CD4-positive, alpha-beta T cell (primary cell): ENCODE measurements at regions of chr7 and their contacts with region 1.

Region 1: GRCh38 chr7:142811154-142811737 is 40.5 kb downstream of the PRSS2 start:
- DNase-seq: peak in 4 of 14 experiments; percentile 59 to 87 (median 86)
- ATAC-seq: no peak
- H3K4me3 ChIP-seq: no peak overlapping the region
- H3K4me3 Mint-ChIP-seq: peak overlapping the region; percentile 62
- H3K27ac ChIP-seq: peak overlapping the region; percentile 95 to 99
- H3K27ac Mint-ChIP-seq: peak overlapping the region; percentile 98
- H3K4me1 ChIP-seq: peaks cover 77% of the 10 kb centered on the region
- H3K4me1 Mint-ChIP-seq: peaks cover 99% of the 10 kb centered on the region
- H3K27me3 ChIP-seq: no peaks in the 10 kb centered on the region
- H3K27me3 Mint-ChIP-seq: no peaks in the 10 kb centered on the region
- CTCF ChIP-seq: peak; percentile 78

Region 2: GRCh38 chr7:142248166-142249160 is 562.8 kb before region 1 on chr7:
- CTCF ChIA-PET with region 1: no interaction called
- POLR2A ChIA-PET with region 1: no interaction called
- intact Hi-C with region 1: no loop called
- DNase-seq: no peak
- ATAC-seq: no peak
- H3K4me3 ChIP-seq: no peak overlapping the region
- H3K4me3 Mint-ChIP-seq: no peak overlapping the region
- H3K27ac ChIP-seq: no peak overlapping the region
- H3K27ac Mint-ChIP-seq: no peak overlapping the region
- H3K4me1 ChIP-seq: no peaks in the 10 kb centered on the region
- H3K4me1 Mint-ChIP-seq: no peaks in the 10 kb centered on the region
- H3K27me3 ChIP-seq: peaks cover 0 to 2% of the 10 kb centered on the region in 2 experiments
- H3K27me3 Mint-ChIP-seq: no peaks in the 10 kb centered on the region
- CTCF ChIP-seq: no peak

Region 3: DNA sequence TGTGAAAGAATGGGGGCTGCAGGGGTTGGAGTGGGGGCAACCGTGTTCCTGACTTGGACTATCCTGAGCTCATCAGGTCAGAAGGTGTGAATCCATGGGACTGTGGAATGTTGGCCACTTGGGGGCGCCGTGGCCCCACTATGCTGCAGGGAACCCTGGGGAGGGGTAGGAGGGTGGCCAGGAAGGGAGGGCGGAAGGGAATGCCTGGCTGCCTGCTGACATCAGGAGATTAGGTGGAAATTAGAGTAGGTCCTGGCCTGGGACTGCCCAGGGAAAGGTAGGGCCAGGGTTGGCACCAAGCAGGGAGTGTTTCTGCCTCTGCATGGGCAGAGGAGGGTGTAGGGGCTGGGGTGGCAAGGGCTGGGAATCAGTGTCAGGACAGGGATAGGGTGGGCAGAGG is 487.5 kb before region 1 on chr7:
- CTCF ChIA-PET with region 1: interaction called, 14 read pairs
- POLR2A ChIA-PET with region 1: interaction called, 74 read pairs
- intact Hi-C with region 1: loop called (anchors 1 to 5 kb)
- DNase-seq: peak in 8 of 14 experiments; percentile 34 to 72 (median 54)
- ATAC-seq: peak; percentile 38
- H3K4me3 ChIP-seq: no peak overlapping the region
- H3K4me3 Mint-ChIP-seq: no peak overlapping the region
- H3K27ac ChIP-seq: peak overlapping the region in 1 of 2 donors; percentile 17
- H3K27ac Mint-ChIP-seq: peak overlapping the region; percentile 83
- H3K4me1 ChIP-seq: peaks cover 24% of the 10 kb centered on the region
- H3K4me1 Mint-ChIP-seq: peaks cover 38% of the 10 kb centered on the region
- H3K27me3 ChIP-seq: no peaks in the 10 kb centered on the region
- H3K27me3 Mint-ChIP-seq: peaks cover 16% of the 10 kb centered on the region
- CTCF ChIP-seq: peak; percentile 45

Region 4: DNA sequence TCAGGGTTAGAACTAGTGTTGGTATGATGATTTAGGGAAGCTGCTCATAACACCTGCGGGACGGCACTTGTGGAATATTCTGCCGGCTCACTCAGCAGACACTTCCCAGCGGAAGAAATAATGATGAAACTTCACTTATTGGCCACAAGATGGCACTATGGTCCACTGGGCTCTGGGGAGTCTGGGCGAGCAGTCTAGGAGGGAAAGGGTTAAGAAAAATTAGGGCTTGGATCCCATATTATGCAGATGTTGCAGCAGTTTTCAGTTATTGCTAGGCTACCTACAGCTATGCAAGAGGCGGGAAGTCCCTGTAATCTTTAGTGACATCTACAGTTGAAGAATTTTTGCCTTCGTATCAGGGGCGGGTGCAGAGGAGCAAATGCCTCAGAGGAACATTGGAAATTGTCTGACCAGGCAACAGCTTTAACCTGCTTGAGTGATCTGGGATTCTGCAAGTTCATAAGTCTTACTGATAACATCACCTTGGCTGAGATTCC is 314.7 kb before region 1 on chr7:
- CTCF ChIA-PET with region 1: no interaction called
- POLR2A ChIA-PET with region 1: interaction called, 15 read pairs
- intact Hi-C with region 1: no loop called
- DNase-seq: peak in 4 of 14 experiments; percentile 36 to 72 (median 60)
- ATAC-seq: peak; percentile 45
- H3K4me3 ChIP-seq: peak overlapping the region; percentile 3
- H3K4me3 Mint-ChIP-seq: peak overlapping the region; percentile 61
- H3K27ac ChIP-seq: peak overlapping the region in 1 of 2 donors; percentile 35
- H3K27ac Mint-ChIP-seq: peak overlapping the region; percentile 68
- H3K4me1 ChIP-seq: peaks cover 28% of the 10 kb centered on the region
- H3K4me1 Mint-ChIP-seq: peaks cover 60% of the 10 kb centered on the region
- H3K27me3 ChIP-seq: no peaks in the 10 kb centered on the region
- H3K27me3 Mint-ChIP-seq: no peaks in the 10 kb centered on the region
- CTCF ChIP-seq: peak; percentile 72

Region 5: GRCh38 chr7:142620402-142620801 is 190.8 kb before region 1 on chr7:
- CTCF ChIA-PET with region 1: interaction called, 4 read pairs
- POLR2A ChIA-PET with region 1: interaction called, 33 read pairs
- intact Hi-C with region 1: no loop called
- DNase-seq: peak in 3 of 14 experiments; percentile 33 to 49 (median 44)
- ATAC-seq: peak; percentile 46
- H3K4me3 ChIP-seq: no peak overlapping the region
- H3K4me3 Mint-ChIP-seq: peak overlapping the region; percentile 52
- H3K27ac ChIP-seq: no peak overlapping the region
- H3K27ac Mint-ChIP-seq: peak overlapping the region; percentile 74
- H3K4me1 ChIP-seq: no peaks in the 10 kb centered on the region
- H3K4me1 Mint-ChIP-seq: peaks cover 6% of the 10 kb centered on the region
- H3K27me3 ChIP-seq: no peaks in the 10 kb centered on the region
- H3K27me3 Mint-ChIP-seq: no peaks in the 10 kb centered on the region
- CTCF ChIP-seq: no peak

Region 6: DNA sequence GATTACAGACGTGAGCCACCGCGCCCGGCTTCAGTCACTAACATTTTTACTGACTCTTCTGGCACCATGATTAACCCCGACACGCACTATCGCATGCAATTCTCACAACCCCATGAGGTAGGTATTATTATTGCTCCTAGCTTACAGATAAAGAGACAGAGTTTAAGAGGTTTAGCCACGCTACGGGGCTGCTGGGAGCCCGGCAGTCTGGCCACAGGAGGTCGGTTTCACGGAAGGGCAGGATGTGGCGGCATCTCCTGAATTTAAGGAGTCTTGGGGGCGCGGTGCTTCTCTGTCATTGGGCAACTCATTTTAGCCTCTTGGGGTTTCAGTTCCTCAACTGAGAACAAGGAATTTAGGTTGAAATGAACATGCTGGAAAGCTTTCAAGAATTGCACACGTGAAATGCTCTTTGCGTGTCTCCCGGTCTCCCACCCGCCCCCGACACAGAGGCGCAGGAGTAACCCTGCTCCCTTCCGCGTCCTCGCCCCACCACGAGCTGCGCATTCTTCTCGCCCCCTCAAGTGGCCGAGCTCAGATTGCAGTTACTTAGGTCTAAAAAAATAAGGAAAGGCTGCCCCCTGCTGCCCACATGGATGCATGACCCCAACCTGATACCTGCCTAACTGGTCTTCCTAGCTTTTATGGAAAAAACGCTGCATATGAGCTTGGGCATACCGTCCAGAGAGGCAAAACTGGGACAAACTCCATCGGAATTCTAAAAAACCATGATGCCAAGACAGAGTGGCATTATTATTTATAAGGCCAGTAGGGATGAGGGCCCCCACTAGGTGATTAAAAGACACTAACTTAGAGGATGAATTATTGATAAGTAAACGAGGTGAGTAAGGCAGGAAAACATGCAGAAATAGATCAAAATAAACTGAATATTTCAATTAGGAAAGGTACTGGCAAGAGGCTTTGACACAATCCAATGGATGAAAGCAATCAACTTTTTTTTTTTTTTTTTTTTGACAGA is 28.0 kb before region 1 on chr7:
- CTCF ChIA-PET with region 1: interaction called, 135 read pairs
- POLR2A ChIA-PET with region 1: interaction called, 5,733 read pairs
- intact Hi-C with region 1: loop called (anchors 1 kb)
- DNase-seq: peak; percentile 62 to 90 (median 74)
- ATAC-seq: peak; percentile 43
- H3K4me3 ChIP-seq: peak overlapping the region; percentile 54
- H3K4me3 Mint-ChIP-seq: peak overlapping the region; percentile 91
- H3K27ac ChIP-seq: no peak overlapping the region
- H3K27ac Mint-ChIP-seq: peak overlapping the region; percentile 98
- H3K4me1 ChIP-seq: peaks cover 13% of the 10 kb centered on the region
- H3K4me1 Mint-ChIP-seq: peaks cover 22% of the 10 kb centered on the region
- H3K27me3 ChIP-seq: no peaks in the 10 kb centered on the region
- H3K27me3 Mint-ChIP-seq: no peaks in the 10 kb centered on the region
- CTCF ChIP-seq: peak; percentile 74

Region 7: GRCh38 chr7:142866361-142867058 is 55.3 kb after region 1 on chr7:
- CTCF ChIA-PET with region 1: no interaction called
- POLR2A ChIA-PET with region 1: interaction called, 18 read pairs
- intact Hi-C with region 1: loop called in 1 of 2 experiments (anchors 10 kb)
- DNase-seq: peak in 4 of 14 experiments; percentile 26 to 47 (median 40)
- ATAC-seq: peak; percentile 11
- H3K4me3 ChIP-seq: no peak overlapping the region
- H3K4me3 Mint-ChIP-seq: no peak overlapping the region
- H3K27ac ChIP-seq: no peak overlapping the region
- H3K27ac Mint-ChIP-seq: no peak overlapping the region
- H3K4me1 ChIP-seq: peaks cover 9% of the 10 kb centered on the region
- H3K4me1 Mint-ChIP-seq: peaks cover 6% of the 10 kb centered on the region
- H3K27me3 ChIP-seq: no peaks in the 10 kb centered on the region
- H3K27me3 Mint-ChIP-seq: no peaks in the 10 kb centered on the region
- CTCF ChIP-seq: peak; percentile 61

Region 8: DNA sequence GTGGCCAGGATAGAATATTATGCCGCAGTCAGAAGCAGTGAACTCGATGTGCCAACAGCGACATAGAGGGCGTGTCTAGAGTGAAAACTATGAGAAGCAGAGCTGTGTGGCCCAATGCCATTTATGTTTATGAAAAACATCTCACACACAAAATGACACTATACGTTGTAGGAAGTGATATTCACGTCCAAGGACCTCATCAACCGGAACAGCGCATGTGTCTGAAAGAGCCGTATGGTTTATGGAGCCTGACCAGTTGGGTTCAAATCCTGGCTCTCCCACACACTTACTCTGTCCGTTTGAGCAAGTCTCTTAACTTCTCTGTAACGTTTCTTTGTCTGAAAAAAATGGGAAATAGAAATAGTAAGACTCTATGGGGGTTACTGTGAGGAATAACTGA is 431.1 kb after region 1 on chr7:
- CTCF ChIA-PET with region 1: no interaction called
- POLR2A ChIA-PET with region 1: no interaction called
- intact Hi-C with region 1: no loop called
- DNase-seq: no peak
- ATAC-seq: no peak
- H3K4me3 ChIP-seq: no peak overlapping the region
- H3K4me3 Mint-ChIP-seq: no peak overlapping the region
- H3K27ac ChIP-seq: no peak overlapping the region
- H3K27ac Mint-ChIP-seq: no peak overlapping the region
- H3K4me1 ChIP-seq: peaks cover 28% of the 10 kb centered on the region
- H3K4me1 Mint-ChIP-seq: peaks cover 49% of the 10 kb centered on the region
- H3K27me3 ChIP-seq: peaks cover 0 to 6% of the 10 kb centered on the region in 2 experiments
- H3K27me3 Mint-ChIP-seq: no peaks in the 10 kb centered on the region
- CTCF ChIP-seq: no peak

Region 9: GRCh38 chr7:143499246-143499645 is 688.0 kb after region 1 on chr7:
- CTCF ChIA-PET with region 1: no interaction called
- POLR2A ChIA-PET with region 1: no interaction called
- intact Hi-C with region 1: no loop called
- DNase-seq: no peak
- ATAC-seq: no peak
- H3K4me3 ChIP-seq: no peak overlapping the region
- H3K4me3 Mint-ChIP-seq: no peak overlapping the region
- H3K27ac ChIP-seq: no peak overlapping the region
- H3K27ac Mint-ChIP-seq: no peak overlapping the region
- H3K4me1 ChIP-seq: no peaks in the 10 kb centered on the region
- H3K4me1 Mint-ChIP-seq: no peaks in the 10 kb centered on the region
- H3K27me3 ChIP-seq: no peaks in the 10 kb centered on the region
- H3K27me3 Mint-ChIP-seq: no peaks in the 10 kb centered on the region
- CTCF ChIP-seq: no peak